CD8-positive, alpha-beta T cell (primary cell): ENCODE measurements at regions of chr7 and their contacts with region 1.

Region 1: GRCh38 chr7:32490127-32490822 is at the start of gene LSM5:
- DNase-seq: peak; percentile 78 to 96 (median 89)
- ATAC-seq: peak; percentile 60
- H3K4me3 ChIP-seq: peak within 1 kb of the TSS; percentile 75 to 79
- H3K4me3 Mint-ChIP-seq: peak within 1 kb of the TSS; percentile 86
- H3K27ac ChIP-seq: peak within 1 kb of the TSS; percentile 85
- H3K27ac Mint-ChIP-seq: peak within 1 kb of the TSS; percentile 98
- H3K4me1 ChIP-seq: peaks cover 19% of the 10 kb centered on the region
- H3K4me1 Mint-ChIP-seq: peaks cover 29% of the 10 kb centered on the region
- H3K27me3 ChIP-seq: no peaks in the 10 kb centered on the region
- H3K27me3 Mint-ChIP-seq: no peaks in the 10 kb centered on the region
- CTCF ChIP-seq: no peak
- total RNA-seq, gene LSM5: 32.1 to 38.6 TPM

Region 2: DNA sequence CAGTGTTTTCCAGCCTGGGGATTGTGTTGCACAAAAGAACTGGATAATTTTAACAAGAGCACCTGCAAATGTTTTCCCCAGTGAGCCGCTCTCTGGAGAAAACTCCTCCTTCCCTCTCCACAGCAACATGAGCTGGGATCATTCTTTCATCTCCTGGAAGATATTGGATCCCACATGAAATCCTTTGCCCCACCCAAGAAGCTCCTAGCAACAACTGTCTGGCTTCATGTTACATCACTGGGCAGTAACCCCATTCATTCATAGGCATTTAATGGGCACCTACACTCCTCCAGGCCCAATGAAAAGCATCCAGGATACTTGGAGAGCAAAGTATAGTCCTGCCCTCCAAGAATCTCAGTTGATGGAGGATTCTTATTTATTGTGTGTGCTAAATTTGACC is 27.3 kb before region 1 on chr7:
- CTCF ChIA-PET with region 1: no interaction called
- POLR2A ChIA-PET with region 1: no interaction called
- intact Hi-C with region 1: no loop called
- DNase-seq: no peak
- ATAC-seq: no peak
- H3K4me3 ChIP-seq: no peak overlapping the region
- H3K4me3 Mint-ChIP-seq: no peak overlapping the region
- H3K27ac ChIP-seq: no peak overlapping the region
- H3K27ac Mint-ChIP-seq: no peak overlapping the region
- H3K4me1 ChIP-seq: no peaks in the 10 kb centered on the region
- H3K4me1 Mint-ChIP-seq: no peaks in the 10 kb centered on the region
- H3K27me3 ChIP-seq: no peaks in the 10 kb centered on the region
- H3K27me3 Mint-ChIP-seq: peaks cover 16% of the 10 kb centered on the region
- CTCF ChIP-seq: no peak

Region 3: GRCh38 chr7:32536585-32536984 is 46.3 kb after region 1 on chr7:
- CTCF ChIA-PET with region 1: interaction called, 3 read pairs
- POLR2A ChIA-PET with region 1: interaction called, 3 read pairs
- intact Hi-C with region 1: loop called (anchors 5 kb)
- DNase-seq: no peak
- ATAC-seq: no peak
- H3K4me3 ChIP-seq: no peak overlapping the region
- H3K4me3 Mint-ChIP-seq: no peak overlapping the region
- H3K27ac ChIP-seq: no peak overlapping the region
- H3K27ac Mint-ChIP-seq: no peak overlapping the region
- H3K4me1 ChIP-seq: peaks cover 4% of the 10 kb centered on the region
- H3K4me1 Mint-ChIP-seq: peaks cover 52% of the 10 kb centered on the region
- H3K27me3 ChIP-seq: no peaks in the 10 kb centered on the region
- H3K27me3 Mint-ChIP-seq: no peaks in the 10 kb centered on the region
- CTCF ChIP-seq: no peak

Region 4: GRCh38 chr7:32564542-32564941 is 74.3 kb after region 1 on chr7:
- CTCF ChIA-PET with region 1: no interaction called
- POLR2A ChIA-PET with region 1: interaction called, 4 read pairs
- intact Hi-C with region 1: loop called in 1 of 2 experiments (anchors 5 kb)
- DNase-seq: no peak
- ATAC-seq: no peak
- H3K4me3 ChIP-seq: no peak overlapping the region
- H3K4me3 Mint-ChIP-seq: no peak overlapping the region
- H3K27ac ChIP-seq: no peak overlapping the region
- H3K27ac Mint-ChIP-seq: no peak overlapping the region
- H3K4me1 ChIP-seq: no peaks in the 10 kb centered on the region
- H3K4me1 Mint-ChIP-seq: peaks cover 12% of the 10 kb centered on the region
- H3K27me3 ChIP-seq: no peaks in the 10 kb centered on the region
- H3K27me3 Mint-ChIP-seq: no peaks in the 10 kb centered on the region
- CTCF ChIP-seq: no peak

Region 5: DNA sequence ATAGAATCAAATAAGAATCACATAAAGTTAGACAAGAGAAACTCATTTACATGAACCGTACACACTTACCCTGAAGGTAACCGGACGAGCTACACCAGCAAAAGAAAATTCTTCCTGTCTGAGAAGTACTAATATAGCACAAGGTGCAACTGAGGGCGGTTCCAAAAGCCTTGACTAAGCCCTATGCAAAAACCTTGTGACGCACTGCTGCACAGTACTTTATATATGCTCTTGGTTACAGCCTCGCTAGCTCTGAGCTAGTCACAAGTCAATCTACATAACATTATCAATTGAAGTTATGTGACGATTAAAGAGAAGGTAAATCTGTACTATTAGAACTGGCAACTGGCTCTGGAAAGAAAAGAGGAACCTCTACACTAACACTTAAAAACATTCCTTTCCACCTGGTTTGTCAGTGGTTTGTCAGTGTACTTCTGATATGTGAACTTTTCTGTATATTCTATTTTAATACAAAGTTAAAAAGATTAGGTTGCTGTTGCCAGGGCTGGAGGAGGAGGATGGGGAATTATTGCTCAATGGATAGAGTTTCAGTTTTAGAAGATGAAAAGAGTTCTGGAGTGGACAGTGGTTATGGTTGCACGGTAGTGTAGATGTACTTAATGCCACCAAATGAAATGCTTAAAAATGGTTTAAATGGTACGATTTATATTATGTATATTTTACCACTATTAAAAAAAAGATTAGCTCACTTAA is 550.7 kb after region 1 on chr7:
- CTCF ChIA-PET with region 1: no interaction called
- POLR2A ChIA-PET with region 1: no interaction called
- intact Hi-C with region 1: loop called in 1 of 2 experiments (anchors 5 kb)
- DNase-seq: peak; percentile 36 to 87 (median 63)
- ATAC-seq: peak; percentile 99
- H3K4me3 ChIP-seq: peak overlapping the region; percentile 3 to 23
- H3K4me3 Mint-ChIP-seq: peak overlapping the region; percentile 77
- H3K27ac ChIP-seq: peak overlapping the region; percentile 54 to 75
- H3K27ac Mint-ChIP-seq: peak overlapping the region; percentile 90
- H3K4me1 ChIP-seq: peaks cover 25% of the 10 kb centered on the region
- H3K4me1 Mint-ChIP-seq: peaks cover 61% of the 10 kb centered on the region
- H3K27me3 ChIP-seq: no peaks in the 10 kb centered on the region
- H3K27me3 Mint-ChIP-seq: no peaks in the 10 kb centered on the region
- CTCF ChIP-seq: no peak